ENCODE measurements at regions of chr15 and their contacts with region 1.

Region 1: GRCh38 chr15:40274350-40275274 is 8.3 kb downstream of the ANKRD63 start:
- DNase-seq: peak; percentile 91
- H3K4me3 Mint-ChIP-seq: no peak overlapping the region
- H3K27ac Mint-ChIP-seq: peak overlapping the region; percentile 28
- H3K4me1 Mint-ChIP-seq: peaks cover 6% of the 10 kb centered on the region
- H3K27me3 Mint-ChIP-seq: peaks cover 27% of the 10 kb centered on the region

Region 2: DNA sequence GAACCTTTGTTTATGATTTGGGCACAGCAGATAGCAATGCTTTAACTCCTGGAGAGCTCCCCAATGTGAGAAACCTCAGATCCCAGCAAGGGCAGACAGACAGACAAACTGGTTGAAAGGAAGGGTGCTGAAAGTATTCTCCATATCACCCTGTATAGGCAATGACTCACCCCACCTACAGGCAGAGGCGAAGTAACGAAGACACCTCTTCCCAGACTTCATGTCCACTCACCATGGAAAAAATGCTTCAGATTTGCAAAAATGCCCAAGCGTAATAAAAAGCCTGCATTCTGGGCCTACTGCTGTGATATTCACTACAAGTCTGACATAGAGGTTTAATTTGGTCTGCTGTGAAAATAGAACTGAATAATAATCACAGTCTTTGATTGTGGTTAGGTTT is 643.3 kb before region 1 on chr15:
- CTCF ChIA-PET with region 1: no interaction called
- POLR2A ChIA-PET with region 1: no interaction called
- intact Hi-C with region 1: no loop called
- DNase-seq: peak; percentile 46
- H3K4me3 Mint-ChIP-seq: no peak overlapping the region
- H3K27ac Mint-ChIP-seq: peak overlapping the region; percentile 35
- H3K4me1 Mint-ChIP-seq: peaks cover 45% of the 10 kb centered on the region
- H3K27me3 Mint-ChIP-seq: no peaks in the 10 kb centered on the region

Region 3: GRCh38 chr15:40044717-40045571 is 229.7 kb before region 1 on chr15:
- CTCF ChIA-PET with region 1: interaction called, 195 read pairs
- POLR2A ChIA-PET with region 1: no interaction called
- intact Hi-C with region 1: loop called (anchors 1 kb)
- DNase-seq: peak; percentile 93
- H3K4me3 Mint-ChIP-seq: peak overlapping the region; percentile 50
- H3K27ac Mint-ChIP-seq: peak overlapping the region; percentile 71
- H3K4me1 Mint-ChIP-seq: peaks cover 65% of the 10 kb centered on the region
- H3K27me3 Mint-ChIP-seq: no peaks in the 10 kb centered on the region

Region 4: GRCh38 chr15:40197434-40197833 is 77.2 kb before region 1 on chr15:
- CTCF ChIA-PET with region 1: interaction called, 10 read pairs
- POLR2A ChIA-PET with region 1: no interaction called
- intact Hi-C with region 1: no loop called
- DNase-seq: no peak
- H3K4me3 Mint-ChIP-seq: no peak overlapping the region
- H3K27ac Mint-ChIP-seq: peak overlapping the region; percentile 14
- H3K4me1 Mint-ChIP-seq: peaks cover 26% of the 10 kb centered on the region
- H3K27me3 Mint-ChIP-seq: no peaks in the 10 kb centered on the region

Region 5: DNA sequence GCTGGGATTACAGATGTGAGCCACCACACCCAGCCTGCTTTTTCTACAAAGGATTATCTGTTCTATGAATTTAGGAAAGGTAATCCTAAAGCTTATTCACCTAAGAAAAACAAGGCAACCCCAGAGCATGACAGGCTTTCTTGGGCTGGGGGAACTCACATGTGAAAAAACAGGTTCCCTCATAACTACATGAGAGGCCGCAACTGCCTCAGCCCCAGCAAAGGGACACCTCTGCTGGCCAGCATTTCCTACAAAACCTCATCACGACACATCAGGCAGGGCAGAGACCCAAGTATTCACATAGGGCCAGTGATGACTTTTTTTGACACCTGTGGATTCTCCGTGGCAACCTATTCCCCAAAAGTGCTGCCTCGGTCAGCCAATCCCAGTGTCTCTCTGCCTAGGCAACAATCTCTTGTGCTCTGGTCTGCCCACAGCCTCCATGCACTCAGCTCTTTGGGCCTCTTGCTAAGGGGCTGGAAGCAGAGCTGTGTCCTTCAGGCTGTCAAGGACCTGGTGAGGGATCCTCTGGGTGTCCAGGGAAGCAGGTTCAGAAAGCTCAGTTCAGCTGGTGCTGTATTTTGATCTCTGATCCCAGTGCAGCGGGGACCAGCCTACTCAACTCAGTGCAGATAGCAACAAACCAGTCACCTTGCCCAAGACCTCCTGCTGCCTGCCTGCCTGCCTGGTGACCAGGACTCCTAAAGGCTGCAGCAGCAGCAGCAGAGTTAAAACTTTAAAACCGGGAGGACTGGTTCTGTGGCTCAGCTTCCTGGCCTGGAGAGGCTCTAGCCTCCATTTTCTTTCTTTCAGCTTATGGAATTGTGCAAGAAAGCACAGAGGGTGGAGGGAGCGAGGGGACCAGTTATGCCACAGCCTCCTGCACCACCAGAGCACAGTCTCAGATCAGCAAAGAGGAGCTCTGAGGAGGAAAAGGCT is 29.7 kb before region 1 on chr15:
- CTCF ChIA-PET with region 1: interaction called, 25 read pairs
- POLR2A ChIA-PET with region 1: no interaction called
- intact Hi-C with region 1: no loop called
- DNase-seq: peak; percentile 2
- H3K4me3 Mint-ChIP-seq: no peak overlapping the region
- H3K27ac Mint-ChIP-seq: no peak overlapping the region
- H3K4me1 Mint-ChIP-seq: no peaks in the 10 kb centered on the region
- H3K27me3 Mint-ChIP-seq: peaks cover 6% of the 10 kb centered on the region

Region 6: GRCh38 chr15:40307421-40308211 is 33.0 kb after region 1 on chr15 and contains the start of gene PLCB2:
- CTCF ChIA-PET with region 1: interaction called, 500 read pairs
- POLR2A ChIA-PET with region 1: no interaction called
- intact Hi-C with region 1: loop called (anchors 1 kb)
- DNase-seq: peak; percentile 80
- H3K4me3 Mint-ChIP-seq: peak within 1 kb of the TSS; percentile 96
- H3K27ac Mint-ChIP-seq: peak within 1 kb of the TSS; percentile 97
- H3K4me1 Mint-ChIP-seq: peaks cover 29% of the 10 kb centered on the region
- H3K27me3 Mint-ChIP-seq: no peaks in the 10 kb centered on the region
- total RNA-seq, gene PLCB2: 65.3 to 70.7 TPM

Region 7: DNA sequence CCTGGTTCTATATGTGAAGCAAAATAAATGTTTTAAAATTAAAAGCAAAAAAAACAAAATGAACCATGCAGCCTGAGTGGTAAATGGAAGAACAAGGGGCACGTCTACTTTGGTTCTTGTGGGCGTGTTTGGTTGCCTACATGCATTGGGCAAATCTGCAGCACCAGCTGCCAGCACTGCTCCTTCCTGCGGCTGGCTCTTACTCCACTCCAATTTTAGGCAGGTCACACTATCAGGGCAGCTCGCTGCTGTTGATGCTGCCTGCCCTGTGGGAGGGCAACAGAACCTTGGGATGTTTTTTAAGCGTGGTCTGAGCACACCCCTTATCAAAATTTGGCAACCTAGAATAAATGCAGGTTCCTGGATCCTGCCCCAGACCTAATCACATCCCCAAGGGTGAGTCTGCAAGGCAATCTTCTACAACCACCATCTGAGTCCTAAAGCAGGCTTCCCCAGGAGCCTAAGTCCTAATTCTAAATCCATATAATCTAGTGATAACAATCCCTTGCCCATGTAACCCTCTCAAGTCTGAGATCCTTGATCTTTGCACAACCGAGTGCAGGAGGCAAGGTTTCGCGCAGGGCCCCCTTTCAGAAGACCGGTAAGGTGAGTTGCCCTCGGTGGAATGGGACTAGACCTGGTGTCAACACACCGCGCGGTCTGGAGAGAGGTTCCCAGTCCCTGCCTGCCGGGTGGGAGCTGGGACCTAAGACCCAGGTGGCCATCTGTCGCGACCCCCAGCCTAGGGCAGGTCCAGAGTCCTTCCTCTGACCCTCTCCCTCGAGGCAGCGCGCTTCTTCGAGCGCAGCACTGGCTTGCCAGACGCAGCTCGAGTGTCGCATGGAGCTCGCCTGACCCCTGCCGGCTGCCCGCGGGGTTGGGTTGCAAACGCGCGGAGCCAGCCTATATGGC is 146.9 kb after region 1 on chr15:
- CTCF ChIA-PET with region 1: interaction called, 24 read pairs
- POLR2A ChIA-PET with region 1: no interaction called
- intact Hi-C with region 1: no loop called
- DNase-seq: peak; percentile 87
- H3K4me3 Mint-ChIP-seq: no peak overlapping the region
- H3K27ac Mint-ChIP-seq: no peak overlapping the region
- H3K4me1 Mint-ChIP-seq: no peaks in the 10 kb centered on the region
- H3K27me3 Mint-ChIP-seq: no peaks in the 10 kb centered on the region

Measured in activated CD4-positive, alpha-beta memory T cell treated with anti-CD3 and anti-CD28 coated beads for 36 hours (primary cell).